ENCODE measurements at regions of chr12 and their contacts with region 1.

Region 1: DNA sequence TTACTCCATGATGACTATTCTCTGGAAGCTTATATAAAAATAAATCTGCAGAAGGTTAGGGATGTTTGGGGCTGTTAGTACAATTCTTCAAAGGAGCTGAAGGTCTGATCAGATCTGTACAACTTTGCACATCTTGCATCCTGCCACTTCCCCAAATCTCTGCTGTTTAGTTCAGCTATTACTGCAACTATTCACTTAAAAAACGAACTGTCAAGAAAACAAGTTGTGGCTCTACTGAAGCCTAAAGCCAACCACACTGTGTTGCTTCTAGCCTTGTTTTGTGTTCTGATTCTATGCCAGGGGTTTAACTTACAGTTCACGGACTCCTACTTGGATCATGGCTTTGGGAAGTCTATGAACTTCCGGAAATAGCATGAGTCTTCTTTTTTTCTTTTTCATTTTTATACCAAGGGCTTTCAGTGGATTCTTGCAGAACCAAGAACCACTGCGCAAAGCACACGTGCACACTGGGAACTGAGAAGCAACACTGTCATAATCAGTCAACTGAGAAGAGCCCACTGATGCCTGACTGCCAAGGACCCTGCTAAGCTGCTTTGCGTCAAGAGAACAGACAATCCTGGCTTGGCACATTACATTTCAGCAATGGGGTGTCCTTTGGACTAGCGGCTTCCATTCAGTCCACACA is 66.3 kb upstream of the EEA1 start:
- DNase-seq: no peak
- H3K4me3 ChIP-seq: no peak overlapping the region
- H3K27ac ChIP-seq: no peak overlapping the region
- H3K4me1 ChIP-seq: no peaks in the 10 kb centered on the region
- H3K27me3 ChIP-seq: no peaks in the 10 kb centered on the region
- CTCF ChIP-seq: no peak
- POLR2A ChIP-seq: no peak

Region 2: GRCh38 chr12:93127582-93128331 is 132.4 kb after region 1 on chr12:
- intact Hi-C with region 1: loop called (anchors 10 kb)
- DNase-seq: peak in 1 of 2 donors; percentile 91
- H3K4me3 ChIP-seq: no peak overlapping the region
- H3K27ac ChIP-seq: peak overlapping the region; percentile 51
- H3K4me1 ChIP-seq: peaks cover 23% of the 10 kb centered on the region
- H3K27me3 ChIP-seq: no peaks in the 10 kb centered on the region
- CTCF ChIP-seq: peak in 1 of 3 experiments; percentile 48
- POLR2A ChIP-seq: no peak

Region 3: GRCh38 chr12:93390549-93391297 is 395.3 kb after region 1 on chr12:
- intact Hi-C with region 1: loop called (anchors 10 kb)
- DNase-seq: no peak
- H3K4me3 ChIP-seq: no peak overlapping the region
- H3K27ac ChIP-seq: no peak overlapping the region
- H3K4me1 ChIP-seq: peaks cover 52% of the 10 kb centered on the region
- H3K27me3 ChIP-seq: no peaks in the 10 kb centered on the region
- CTCF ChIP-seq: no peak
- POLR2A ChIP-seq: no peak